ENCODE measurements at regions of chrX and their contacts with region 1.

Region 1: GRCh38 chrX:23694606-23695005 is 27.3 kb downstream of the PRDX4 start:
- DNase-seq: peak; percentile 46
- H3K4me3 ChIP-seq: no peak overlapping the region
- H3K27ac ChIP-seq: no peak overlapping the region
- H3K4me1 ChIP-seq: no peaks in the 10 kb centered on the region
- H3K27me3 ChIP-seq: no peaks in the 10 kb centered on the region
- CTCF ChIP-seq: peak in 3 of 4 experiments; percentile 17 to 38 (median 30)
- POLR2A ChIP-seq: no peak

Region 2: DNA sequence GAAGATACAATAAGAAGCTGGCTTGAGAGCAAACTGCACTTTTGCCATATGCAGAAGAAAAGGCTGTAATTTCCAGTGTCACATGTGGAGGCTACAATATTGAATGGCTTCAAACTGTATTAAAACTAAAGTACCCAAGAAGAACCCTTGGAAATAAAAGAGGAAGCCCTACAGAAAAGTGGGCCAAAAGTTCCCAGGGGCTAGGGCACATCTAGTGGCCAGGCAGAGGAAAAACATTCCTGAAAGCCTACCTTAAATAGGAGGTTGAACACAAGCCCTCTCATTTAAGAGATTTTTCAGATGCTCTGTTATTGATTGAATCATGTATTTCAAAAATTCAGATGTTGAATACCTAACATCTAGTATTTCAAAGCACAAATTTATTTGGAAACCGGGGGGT is 68.0 kb before region 1 on chrX:
- intact Hi-C with region 1: no loop called
- DNase-seq: no peak
- H3K4me3 ChIP-seq: no peak overlapping the region
- H3K27ac ChIP-seq: no peak overlapping the region
- H3K4me1 ChIP-seq: no peaks in the 10 kb centered on the region
- H3K27me3 ChIP-seq: no peaks in the 10 kb centered on the region
- CTCF ChIP-seq: no peak
- POLR2A ChIP-seq: no peak

Region 3: DNA sequence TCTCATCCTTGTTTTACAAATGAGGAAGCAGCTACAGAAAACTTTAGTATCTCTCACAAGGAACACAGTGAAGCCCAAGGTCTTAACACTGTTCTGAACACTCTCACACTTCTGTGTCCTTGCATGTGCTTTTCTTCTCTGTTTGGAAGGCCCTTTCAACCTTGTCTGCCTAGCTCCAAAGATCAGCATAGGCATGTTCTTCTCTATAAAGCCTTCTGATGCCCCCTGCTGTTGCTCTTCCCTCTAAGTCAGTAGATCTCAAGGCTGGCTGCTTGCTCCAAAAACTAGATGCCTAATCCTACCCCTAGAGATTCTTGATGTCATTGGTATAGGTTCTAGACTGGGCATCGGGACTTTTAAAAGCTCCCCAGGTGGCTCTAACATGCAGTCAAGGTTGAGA is 207.2 kb after region 1 on chrX:
- intact Hi-C with region 1: loop called (anchors 5 kb)
- DNase-seq: peak; percentile 57
- H3K4me3 ChIP-seq: no peak overlapping the region
- H3K27ac ChIP-seq: peak overlapping the region; percentile 67 to 68
- H3K4me1 ChIP-seq: no peaks in the 10 kb centered on the region
- H3K27me3 ChIP-seq: no peaks in the 10 kb centered on the region
- CTCF ChIP-seq: peak in 3 of 4 experiments; percentile 52 to 72 (median 64)
- POLR2A ChIP-seq: no peak